ENCODE measurements at regions of chr5 and their contacts with region 1.

Region 1: GRCh38 chr5:118987988-118988865 is at the start of gene DTWD2:
- DNase-seq: peak; percentile 93
- ATAC-seq: peak; percentile 96
- H3K4me3 Mint-ChIP-seq: peak within 1 kb of the TSS; percentile 77
- H3K27ac Mint-ChIP-seq: peak within 1 kb of the TSS; percentile 67
- H3K4me1 Mint-ChIP-seq: peaks cover 13% of the 10 kb centered on the region
- H3K27me3 Mint-ChIP-seq: no peaks in the 10 kb centered on the region
- total RNA-seq, gene DTWD2: 2.6 to 3.3 TPM

Region 2: GRCh38 chr5:118692811-118693342 is 295.4 kb before region 1 on chr5:
- CTCF ChIA-PET with region 1: no interaction called
- POLR2A ChIA-PET with region 1: no interaction called
- DNase-seq: no peak
- ATAC-seq: no peak
- H3K4me3 Mint-ChIP-seq: no peak overlapping the region
- H3K27ac Mint-ChIP-seq: no peak overlapping the region
- H3K4me1 Mint-ChIP-seq: no peaks in the 10 kb centered on the region
- H3K27me3 Mint-ChIP-seq: no peaks in the 10 kb centered on the region

Region 3: GRCh38 chr5:119022017-119022745 is 34.0 kb after region 1 on chr5:
- CTCF ChIA-PET with region 1: interaction called, 17 read pairs
- POLR2A ChIA-PET with region 1: no interaction called
- DNase-seq: no peak
- ATAC-seq: peak; percentile 68
- H3K4me3 Mint-ChIP-seq: no peak overlapping the region
- H3K27ac Mint-ChIP-seq: no peak overlapping the region
- H3K4me1 Mint-ChIP-seq: peaks cover 3% of the 10 kb centered on the region
- H3K27me3 Mint-ChIP-seq: no peaks in the 10 kb centered on the region

Region 4: GRCh38 chr5:119079318-119079921 is 91.2 kb after region 1 on chr5:
- CTCF ChIA-PET with region 1: interaction called, 10 read pairs
- POLR2A ChIA-PET with region 1: no interaction called
- DNase-seq: no peak
- ATAC-seq: peak; percentile 60
- H3K4me3 Mint-ChIP-seq: no peak overlapping the region
- H3K27ac Mint-ChIP-seq: peak overlapping the region; percentile 14
- H3K4me1 Mint-ChIP-seq: peaks cover 30% of the 10 kb centered on the region
- H3K27me3 Mint-ChIP-seq: no peaks in the 10 kb centered on the region

Region 5: GRCh38 chr5:119255571-119256356 is 267.5 kb after region 1 on chr5:
- CTCF ChIA-PET with region 1: interaction called, 11 read pairs
- POLR2A ChIA-PET with region 1: no interaction called
- DNase-seq: no peak
- ATAC-seq: no peak
- H3K4me3 Mint-ChIP-seq: no peak overlapping the region
- H3K27ac Mint-ChIP-seq: no peak overlapping the region
- H3K4me1 Mint-ChIP-seq: peaks cover 2% of the 10 kb centered on the region
- H3K27me3 Mint-ChIP-seq: no peaks in the 10 kb centered on the region

Region 6: DNA sequence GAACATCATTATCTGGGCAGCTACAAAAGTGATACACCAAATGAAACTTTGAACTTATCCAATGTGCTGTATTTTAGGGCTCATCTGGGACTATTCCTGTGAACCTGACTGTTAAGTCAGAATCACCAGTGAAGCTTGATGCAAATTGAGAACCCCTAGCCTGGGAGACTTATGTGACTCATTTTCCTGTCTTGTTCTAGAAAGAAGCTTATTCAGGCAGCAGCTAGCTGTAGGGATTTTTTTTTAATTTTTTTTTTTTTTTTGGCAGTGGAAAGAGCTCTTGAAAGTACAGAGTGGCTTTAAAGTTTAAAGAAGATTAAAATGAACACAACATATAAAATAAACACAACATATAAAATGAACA is 286.5 kb after region 1 on chr5:
- CTCF ChIA-PET with region 1: interaction called, 34 read pairs
- POLR2A ChIA-PET with region 1: no interaction called
- DNase-seq: no peak
- ATAC-seq: peak; percentile 35
- H3K4me3 Mint-ChIP-seq: peak overlapping the region; percentile 75
- H3K27ac Mint-ChIP-seq: peak overlapping the region; percentile 87
- H3K4me1 Mint-ChIP-seq: peaks cover 88% of the 10 kb centered on the region
- H3K27me3 Mint-ChIP-seq: peaks cover 2% of the 10 kb centered on the region

Region 7: DNA sequence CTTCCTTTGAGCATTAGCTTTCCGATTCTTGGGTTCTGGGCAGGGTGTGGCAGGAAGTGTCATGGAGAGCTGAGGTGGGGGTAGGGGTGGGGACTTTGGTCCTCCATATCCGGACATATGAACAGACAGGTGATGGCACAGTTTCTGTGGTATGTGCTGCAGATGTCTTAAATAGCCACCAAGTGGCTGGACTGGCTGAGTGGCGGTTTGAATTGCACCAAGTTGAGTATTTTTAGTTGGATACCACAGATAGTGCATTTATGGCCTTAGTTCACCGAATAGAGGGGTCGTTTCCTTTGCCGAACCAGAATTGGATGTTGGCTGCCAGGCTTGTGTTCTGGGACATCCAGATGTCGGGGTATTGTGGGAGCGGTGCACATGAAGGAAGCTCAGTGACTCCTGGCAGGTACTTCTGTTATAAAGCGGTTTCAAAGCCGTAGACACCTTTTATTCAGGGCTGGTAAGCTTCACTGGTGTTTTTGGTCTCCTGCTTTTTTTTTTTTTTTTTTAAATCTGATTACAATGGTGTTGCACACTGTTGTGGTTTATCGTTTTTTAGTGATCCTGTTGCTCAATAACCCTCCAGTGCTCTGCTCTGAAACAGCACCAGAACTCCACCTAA is 352.5 kb after region 1 on chr5:
- CTCF ChIA-PET with region 1: interaction called, 17 read pairs
- POLR2A ChIA-PET with region 1: no interaction called
- DNase-seq: peak; percentile 89
- ATAC-seq: peak; percentile 68
- H3K4me3 Mint-ChIP-seq: peak overlapping the region; percentile 78
- H3K27ac Mint-ChIP-seq: peak overlapping the region; percentile 95
- H3K4me1 Mint-ChIP-seq: peaks cover 96% of the 10 kb centered on the region
- H3K27me3 Mint-ChIP-seq: no peaks in the 10 kb centered on the region

Region 8: DNA sequence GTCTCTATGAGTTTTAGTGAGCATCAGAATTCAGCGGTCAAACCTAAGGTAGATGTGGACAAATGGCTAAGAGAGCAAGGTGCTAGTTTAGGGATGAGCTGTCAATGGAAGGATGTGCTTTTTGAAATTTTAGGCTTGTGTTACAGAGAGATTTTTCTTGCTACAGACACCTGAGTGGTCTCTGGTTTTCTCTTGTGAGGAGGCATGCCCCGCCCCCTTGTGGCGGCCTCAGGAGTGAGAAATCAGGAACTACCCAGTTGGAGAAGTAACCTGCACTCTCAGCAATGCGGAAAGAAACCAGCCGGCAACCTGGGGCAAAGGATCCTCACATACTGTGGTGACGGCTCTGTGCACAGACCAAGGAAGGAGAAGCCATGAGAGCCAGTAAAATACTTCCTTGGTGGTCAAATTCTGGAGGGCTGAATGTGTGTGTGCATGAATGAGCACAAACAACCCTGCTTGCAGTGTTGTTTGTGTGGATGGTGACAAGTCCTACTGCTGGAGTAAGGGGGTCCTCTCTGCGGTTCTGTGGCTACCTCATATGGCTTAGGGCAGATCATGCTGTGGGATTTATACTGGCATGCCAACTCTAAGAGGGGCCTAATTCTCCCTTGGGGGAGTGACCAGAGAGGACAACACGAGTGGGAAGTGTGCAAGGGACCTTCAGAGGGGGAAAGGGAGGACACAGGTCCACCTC is 447.4 kb after region 1 on chr5:
- CTCF ChIA-PET with region 1: interaction called, 63 read pairs
- POLR2A ChIA-PET with region 1: no interaction called
- DNase-seq: peak; percentile 80
- ATAC-seq: peak; percentile 80
- H3K4me3 Mint-ChIP-seq: no peak overlapping the region
- H3K27ac Mint-ChIP-seq: no peak overlapping the region
- H3K4me1 Mint-ChIP-seq: peaks cover 26% of the 10 kb centered on the region
- H3K27me3 Mint-ChIP-seq: peaks cover 17% of the 10 kb centered on the region